Endothelial cell of umbilical vein (primary cell): ENCODE measurements at regions of chr2 and their contacts with region 1.

Region 1: DNA sequence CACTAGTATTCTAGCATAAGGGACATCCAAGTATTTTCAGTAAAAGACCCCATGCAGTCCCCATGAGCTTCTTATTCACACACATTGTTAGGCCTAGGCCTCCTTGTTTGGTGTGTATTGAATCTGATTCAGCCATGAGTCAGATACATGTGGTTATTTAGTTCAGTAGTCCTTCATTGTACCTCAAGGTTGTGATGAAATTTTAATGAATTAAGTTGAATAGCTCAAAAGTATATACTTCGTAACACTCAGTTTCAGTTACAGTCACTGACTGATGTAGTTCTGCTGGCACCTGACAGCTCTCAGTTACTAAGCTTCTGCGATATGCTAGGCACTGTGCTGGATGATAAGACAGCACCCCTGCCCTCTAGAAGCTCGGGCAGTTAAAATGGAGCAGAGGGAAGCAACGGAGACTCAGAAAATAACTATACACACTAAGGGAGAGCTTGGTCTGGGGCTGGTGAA is 86.4 kb downstream of the XRCC5 start:
- DNase-seq: no peak
- H3K4me3 ChIP-seq: no peak overlapping the region
- H3K27ac ChIP-seq: no peak overlapping the region
- H3K4me1 ChIP-seq: no peaks in the 10 kb centered on the region
- H3K27me3 ChIP-seq: no peaks in the 10 kb centered on the region
- CTCF ChIP-seq: no peak
- POLR2A ChIP-seq: no peak

Region 2: DNA sequence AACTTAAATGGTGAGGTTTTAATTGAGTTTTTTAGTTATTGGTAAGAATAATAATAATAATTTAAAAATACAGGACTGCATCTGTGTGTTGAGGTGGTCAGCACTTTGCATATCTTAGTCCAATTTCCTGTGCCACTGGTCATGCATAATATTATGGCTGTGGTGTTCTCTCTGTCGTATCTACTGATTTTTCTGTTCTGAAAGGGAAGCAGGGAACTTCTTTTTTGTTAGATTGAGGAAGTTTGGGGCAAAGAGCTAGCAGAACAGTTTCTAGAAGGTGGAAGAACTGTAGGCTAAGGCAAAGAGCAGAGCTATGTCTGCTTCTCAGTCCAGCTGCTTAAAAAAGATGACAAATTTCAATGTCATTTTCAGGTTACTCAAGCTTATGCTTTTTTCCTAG is 12.1 kb before region 1 on chr2:
- CTCF ChIA-PET with region 1: interaction called, 12 read pairs
- POLR2A ChIA-PET with region 1: no interaction called
- dilution Hi-C with region 1: no loop called
- intact Hi-C with region 1: no loop called
- DNase-seq: no peak
- H3K4me3 ChIP-seq: no peak overlapping the region
- H3K27ac ChIP-seq: no peak overlapping the region
- H3K4me1 ChIP-seq: peaks cover 11% of the 10 kb centered on the region
- H3K27me3 ChIP-seq: no peaks in the 10 kb centered on the region
- CTCF ChIP-seq: no peak
- POLR2A ChIP-seq: no peak